ENCODE measurements at regions of chr1 and their contacts with region 1.

Region 1: GRCh38 chr1:185681034-185681633 is 53.1 kb upstream of the HMCN1 start:
- DNase-seq: no peak
- ATAC-seq: peak; percentile 79
- H3K4me3 Mint-ChIP-seq: no peak overlapping the region
- H3K27ac Mint-ChIP-seq: no peak overlapping the region
- H3K4me1 Mint-ChIP-seq: peaks cover 14% of the 10 kb centered on the region
- H3K27me3 Mint-ChIP-seq: no peaks in the 10 kb centered on the region
- CTCF ChIP-seq: no peak; the same call in 1 of the 2 replicates

Region 2: DNA sequence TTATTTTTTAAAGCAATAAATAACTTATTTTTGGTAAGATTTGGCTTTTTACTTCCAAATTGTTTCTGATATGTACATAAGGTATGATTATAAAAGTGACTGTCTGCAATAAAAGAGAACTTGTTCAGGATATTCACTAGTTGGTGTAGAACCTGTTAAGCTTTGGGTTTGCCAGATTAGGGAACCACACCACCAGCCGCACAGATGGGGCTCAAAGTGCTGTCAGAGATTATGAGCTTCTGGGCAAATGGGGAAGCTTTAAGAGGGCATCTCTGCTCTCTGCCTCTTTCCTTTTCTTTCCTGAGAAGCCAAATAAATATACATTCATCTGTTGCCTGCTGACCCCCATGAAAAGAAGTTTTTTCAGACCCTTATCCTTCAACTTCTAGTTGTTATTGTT is 389.5 kb before region 1 on chr1:
- CTCF ChIA-PET with region 1: interaction called, 13 read pairs
- POLR2A ChIA-PET with region 1: no interaction called
- DNase-seq: no peak
- ATAC-seq: no peak
- H3K4me3 Mint-ChIP-seq: no peak overlapping the region
- H3K27ac Mint-ChIP-seq: no peak overlapping the region
- H3K4me1 Mint-ChIP-seq: no peaks in the 10 kb centered on the region
- H3K27me3 Mint-ChIP-seq: no peaks in the 10 kb centered on the region
- CTCF ChIP-seq: no peak

Region 3: GRCh38 chr1:185559684-185560331 is 121.3 kb before region 1 on chr1:
- CTCF ChIA-PET with region 1: interaction called, 21 read pairs
- POLR2A ChIA-PET with region 1: no interaction called
- DNase-seq: peak; percentile 58
- ATAC-seq: peak; percentile 100
- H3K4me3 Mint-ChIP-seq: no peak overlapping the region
- H3K27ac Mint-ChIP-seq: no peak overlapping the region
- H3K4me1 Mint-ChIP-seq: peaks cover 10% of the 10 kb centered on the region
- H3K27me3 Mint-ChIP-seq: no peaks in the 10 kb centered on the region
- CTCF ChIP-seq: no peak

Region 4: DNA sequence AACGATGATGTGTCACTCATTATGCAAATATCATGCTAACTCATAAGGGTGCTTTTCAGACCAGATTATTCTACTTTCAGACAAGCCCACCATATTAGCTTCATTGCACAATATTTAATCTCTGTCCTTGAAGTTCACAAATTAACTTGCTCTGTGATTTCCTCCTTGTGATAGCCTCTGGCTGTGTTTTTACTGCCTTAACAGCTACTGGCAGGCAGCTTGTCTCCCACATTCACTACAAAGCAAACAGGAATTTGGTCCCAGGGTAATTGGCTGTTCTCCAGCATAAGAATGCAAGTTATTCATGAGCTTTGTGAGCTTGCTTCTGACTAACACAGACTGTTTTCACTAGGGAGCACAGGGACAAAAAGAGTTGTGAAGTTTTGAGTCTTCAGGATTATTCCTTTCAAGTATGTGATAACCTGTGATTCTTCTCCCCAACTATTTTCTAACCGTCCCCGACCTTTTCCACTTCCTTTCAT is 34.9 kb before region 1 on chr1:
- CTCF ChIA-PET with region 1: interaction called, 24 read pairs
- POLR2A ChIA-PET with region 1: no interaction called
- DNase-seq: no peak
- ATAC-seq: peak; percentile 96
- H3K4me3 Mint-ChIP-seq: peak overlapping the region; percentile 54
- H3K27ac Mint-ChIP-seq: peak overlapping the region; percentile 100
- H3K4me1 Mint-ChIP-seq: peaks cover 37% of the 10 kb centered on the region
- H3K27me3 Mint-ChIP-seq: peaks cover 13% of the 10 kb centered on the region
- CTCF ChIP-seq: no peak

Region 5: GRCh38 chr1:185663332-185663731 is 17.8 kb before region 1 on chr1:
- CTCF ChIA-PET with region 1: interaction called, 16 read pairs
- POLR2A ChIA-PET with region 1: no interaction called
- DNase-seq: no peak
- ATAC-seq: peak; percentile 53
- H3K4me3 Mint-ChIP-seq: no peak overlapping the region
- H3K27ac Mint-ChIP-seq: no peak overlapping the region
- H3K4me1 Mint-ChIP-seq: peaks cover 35% of the 10 kb centered on the region
- H3K27me3 Mint-ChIP-seq: no peaks in the 10 kb centered on the region; the same call in 1 of the 2 replicates
- CTCF ChIP-seq: no peak

Region 6: DNA sequence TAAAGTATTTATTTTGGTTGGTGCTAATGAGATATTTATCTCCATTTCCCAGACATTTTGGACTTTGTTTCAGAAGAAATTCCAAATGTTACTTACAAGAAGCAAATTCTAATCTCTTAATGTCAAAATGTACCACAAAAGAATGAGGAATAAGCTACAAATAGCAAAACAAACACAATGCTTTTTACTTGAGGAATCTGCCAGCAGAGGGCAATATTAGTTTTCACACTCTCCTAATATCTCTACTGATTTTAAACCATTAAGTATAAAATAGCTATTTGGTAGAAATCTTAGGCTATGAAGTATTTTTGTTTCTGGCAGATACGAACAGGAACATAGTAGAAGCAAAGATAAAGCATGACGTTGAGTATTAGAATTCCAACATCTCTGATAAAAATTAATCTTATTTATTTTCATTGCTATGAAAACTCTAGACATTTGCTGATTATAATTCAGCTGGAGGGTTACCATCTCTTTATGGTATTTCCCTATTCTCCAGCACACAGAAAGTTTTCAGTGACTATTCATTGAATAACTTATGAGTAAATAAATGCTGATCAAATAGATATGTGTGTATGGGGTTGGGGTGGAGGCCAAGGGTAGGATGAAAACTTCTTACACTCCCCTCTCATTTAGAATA is 39.6 kb after region 1 on chr1:
- CTCF ChIA-PET with region 1: interaction called, 11 read pairs
- POLR2A ChIA-PET with region 1: no interaction called
- DNase-seq: no peak
- ATAC-seq: no peak
- H3K4me3 Mint-ChIP-seq: no peak overlapping the region
- H3K27ac Mint-ChIP-seq: no peak overlapping the region
- H3K4me1 Mint-ChIP-seq: no peaks in the 10 kb centered on the region
- H3K27me3 Mint-ChIP-seq: no peaks in the 10 kb centered on the region
- CTCF ChIP-seq: 0 out of 2 replicates have a peak, but pooled peaks have one; percentile 31

Region 7: DNA sequence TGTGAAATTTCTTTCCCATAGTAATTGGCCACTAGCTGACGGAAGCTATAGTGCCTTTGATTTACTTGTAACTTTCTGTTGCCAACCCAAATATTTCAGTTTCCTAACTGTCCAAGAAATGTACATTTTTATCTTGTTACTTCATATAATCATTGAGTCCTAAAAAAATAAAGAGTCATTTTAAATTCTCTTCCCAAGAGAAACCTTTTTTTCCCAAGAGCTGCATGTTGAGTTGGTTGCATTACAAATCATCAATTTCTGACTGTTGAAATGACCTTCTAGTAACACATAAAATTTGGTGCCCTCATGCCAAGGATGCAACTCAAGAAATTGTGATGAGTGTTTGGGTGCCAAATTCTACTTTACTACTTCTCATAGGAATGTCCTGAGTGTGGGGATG is 114.0 kb after region 1 on chr1:
- CTCF ChIA-PET with region 1: no interaction called
- POLR2A ChIA-PET with region 1: no interaction called
- DNase-seq: no peak
- ATAC-seq: no peak
- H3K4me3 Mint-ChIP-seq: no peak overlapping the region
- H3K27ac Mint-ChIP-seq: no peak overlapping the region
- H3K4me1 Mint-ChIP-seq: peaks cover 4% of the 10 kb centered on the region; the same call in 1 of the 2 replicates
- H3K27me3 Mint-ChIP-seq: no peaks in the 10 kb centered on the region
- CTCF ChIP-seq: no peak